ENCODE measurements at regions of chr10 and their contacts with region 1.

Region 1: GRCh38 chr10:3034616-3035015 is 32.7 kb upstream of the PFKP start:
- DNase-seq: no peak
- H3K4me3 ChIP-seq: no peak overlapping the region
- H3K27ac ChIP-seq: no peak overlapping the region
- H3K4me1 ChIP-seq: no peaks in the 10 kb centered on the region
- H3K27me3 ChIP-seq: no peaks in the 10 kb centered on the region
- CTCF ChIP-seq: no peak
- EP300 ChIP-seq: no peak
- POLR2A ChIP-seq: no peak

Region 2: DNA sequence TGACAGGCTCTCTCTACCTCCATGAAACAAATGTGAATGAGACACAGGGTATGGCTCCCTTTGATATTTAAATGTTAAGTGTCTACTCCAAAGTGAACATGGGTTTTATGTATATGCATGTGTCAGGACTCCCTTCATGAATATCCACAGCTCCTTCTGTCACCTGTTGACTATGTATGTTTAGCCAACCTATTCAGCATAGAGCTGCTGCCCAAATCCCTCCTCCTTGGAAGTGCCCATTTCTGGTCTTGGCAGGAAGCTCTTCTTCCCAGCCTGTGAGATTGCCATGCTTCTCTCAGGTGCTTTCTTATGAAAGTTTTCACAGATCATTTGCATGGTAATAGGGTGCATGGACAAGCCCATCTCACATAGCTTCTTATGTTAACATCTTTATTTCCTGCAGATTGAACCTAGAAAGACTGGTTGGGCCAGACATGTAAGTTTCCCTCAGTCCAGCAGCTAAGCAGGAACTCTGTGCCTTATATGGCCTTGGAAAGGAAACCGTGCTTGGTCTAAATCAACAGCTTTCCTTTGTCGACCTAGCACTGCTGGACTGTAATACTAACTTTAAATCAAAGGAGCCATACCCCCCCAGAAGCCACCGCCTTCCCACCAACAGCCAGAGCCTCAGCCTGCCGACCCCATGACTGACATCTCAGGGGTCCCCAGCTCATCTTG is 1586.2 kb before region 1 on chr10:
- in situ Hi-C with region 1: no loop called
- intact Hi-C with region 1: no loop called
- DNase-seq: no peak
- H3K4me3 ChIP-seq: no peak overlapping the region
- H3K27ac ChIP-seq: no peak overlapping the region
- H3K4me1 ChIP-seq: no peaks in the 10 kb centered on the region
- H3K27me3 ChIP-seq: no peaks in the 10 kb centered on the region
- CTCF ChIP-seq: no peak
- EP300 ChIP-seq: no peak
- POLR2A ChIP-seq: no peak

Region 3: DNA sequence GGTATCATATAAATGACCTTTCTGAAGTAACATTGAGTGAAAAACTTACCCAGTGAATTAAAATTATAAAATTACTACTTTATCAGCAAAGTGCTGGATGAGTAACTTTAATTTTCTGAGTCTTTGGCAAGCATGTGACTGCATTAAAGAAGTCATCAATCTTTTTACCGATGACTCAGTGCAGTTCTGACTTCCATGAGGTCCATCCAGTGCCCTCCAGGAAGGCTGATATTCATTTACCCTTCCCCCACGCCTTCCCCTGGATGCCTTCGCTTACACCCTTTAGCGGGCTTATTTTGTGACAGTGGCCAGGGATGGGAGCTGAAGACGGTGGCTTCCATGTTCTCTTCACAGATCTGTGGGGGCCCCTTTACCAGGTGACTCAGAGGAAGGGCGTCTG is 540.2 kb before region 1 on chr10:
- in situ Hi-C with region 1: no loop called
- intact Hi-C with region 1: loop called (anchors 5 kb)
- DNase-seq: no peak
- H3K4me3 ChIP-seq: no peak overlapping the region
- H3K27ac ChIP-seq: no peak overlapping the region
- H3K4me1 ChIP-seq: no peaks in the 10 kb centered on the region
- H3K27me3 ChIP-seq: no peaks in the 10 kb centered on the region
- CTCF ChIP-seq: no peak
- EP300 ChIP-seq: no peak
- POLR2A ChIP-seq: no peak

Measured in transverse colon (tissue), 4 donors.